ENCODE measurements at regions of chr11 and their contacts with region 1.

Region 1: GRCh38 chr11:1546536-1547400 is 25.3 kb downstream of the DUSP8 start:
- DNase-seq: peak; percentile 21
- ATAC-seq: peak; percentile 90
- H3K4me3 ChIP-seq: peak overlapping the region; percentile 17
- H3K27ac ChIP-seq: no peak overlapping the region
- H3K4me1 ChIP-seq: peaks cover 4% of the 10 kb centered on the region; the same call in 1 of the 2 replicates
- H3K27me3 ChIP-seq: peaks cover 56% of the 10 kb centered on the region
- CTCF ChIP-seq: peak; percentile 86
- POLR2A ChIP-seq: no peak
- RAD21 ChIP-seq: peak; percentile 85

Region 2: DNA sequence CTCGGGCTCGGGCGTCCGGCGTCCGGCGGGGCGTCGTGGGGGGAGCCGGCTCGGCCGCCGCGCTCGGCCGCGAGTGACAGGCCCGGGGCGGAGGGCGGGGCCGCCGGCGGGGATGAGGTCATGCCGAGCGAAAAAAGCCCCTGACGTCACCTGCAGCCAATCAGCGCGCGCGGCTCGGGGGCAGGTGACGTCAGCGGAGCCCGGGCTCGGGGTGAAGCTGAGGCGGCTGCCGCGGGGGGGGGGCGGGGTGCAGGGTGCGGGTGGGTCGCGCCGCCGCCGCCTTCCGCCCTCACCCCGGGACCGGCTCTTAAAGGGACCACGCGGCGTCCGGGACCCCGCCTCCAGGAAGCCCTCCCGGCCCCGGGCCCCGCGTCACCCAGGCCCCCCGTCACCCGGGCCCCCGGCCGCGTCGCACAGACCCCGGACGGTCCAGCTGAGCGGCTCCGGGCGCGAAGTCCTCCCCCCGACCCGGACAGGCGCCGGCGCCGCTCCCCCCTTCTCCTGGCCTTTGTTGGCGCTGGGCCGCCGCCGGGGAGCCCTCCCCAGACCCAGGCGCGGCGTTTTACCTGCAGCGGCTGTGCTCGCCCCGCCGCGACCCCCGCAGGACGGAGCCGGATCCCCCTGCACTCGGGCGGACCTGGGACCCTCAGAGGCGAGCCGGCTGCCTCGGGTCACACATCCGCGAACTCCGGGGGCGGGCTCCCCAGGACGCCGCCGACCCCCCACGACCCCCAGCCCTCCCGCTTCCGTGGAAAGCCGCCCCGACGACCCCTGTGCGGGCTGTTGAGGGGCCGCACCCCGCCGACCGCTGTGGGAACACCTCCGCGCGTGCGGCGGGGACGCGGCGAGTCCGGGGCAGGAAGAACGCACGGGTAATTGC is 25.7 kb after region 1 on chr11 and contains the start of gene DUSP8:
- CTCF ChIA-PET with region 1: interaction called, 30 read pairs
- POLR2A ChIA-PET with region 1: interaction called, 5 read pairs
- dilution Hi-C with region 1: no loop called
- in situ Hi-C with region 1: no loop called
- intact Hi-C with region 1: loop called (anchors 1 kb)
- DNase-seq: peak; percentile 84
- ATAC-seq: peak; percentile 83
- H3K4me3 ChIP-seq: peak within 1 kb of the TSS; percentile 58
- H3K27ac ChIP-seq: peak within 1 kb of the TSS; percentile 15; the same call in 1 of the 2 replicates
- H3K4me1 ChIP-seq: peaks cover 3% of the 10 kb centered on the region
- H3K27me3 ChIP-seq: peaks cover 24% of the 10 kb centered on the region
- CTCF ChIP-seq: no peak
- POLR2A ChIP-seq: peak; percentile 32; the same call in 1 of the 2 replicates
- RAD21 ChIP-seq: no peak
- total RNA-seq, gene DUSP8: 0.28 and 0.72 TPM in 2 replicates

Region 3: DNA sequence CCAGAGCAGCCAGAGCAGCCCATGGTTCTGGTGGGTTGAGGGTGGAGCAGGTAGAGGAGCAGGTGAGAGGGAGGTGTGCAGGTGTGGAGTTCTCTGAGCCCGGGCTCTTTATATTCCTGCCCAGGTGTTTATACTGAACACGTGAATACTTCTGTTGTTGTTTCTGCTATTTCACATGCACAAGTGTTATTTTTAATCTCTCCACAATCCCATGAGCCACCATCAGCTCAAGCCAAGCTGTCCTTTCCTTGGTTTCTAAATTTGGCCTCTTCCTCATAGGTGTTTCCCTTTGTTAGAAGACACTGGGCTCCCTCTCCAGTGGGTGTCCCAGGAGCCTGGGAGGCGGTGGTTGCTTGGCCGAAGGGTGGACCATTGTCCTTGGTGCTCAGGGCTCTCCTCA is 61.6 kb after region 1 on chr11 and contains the start of gene KRTAP5-3:
- CTCF ChIA-PET with region 1: no interaction called
- POLR2A ChIA-PET with region 1: no interaction called
- dilution Hi-C with region 1: no loop called
- in situ Hi-C with region 1: no loop called
- intact Hi-C with region 1: no loop called
- DNase-seq: no peak
- ATAC-seq: no peak
- H3K4me3 ChIP-seq: no peak within 1 kb of the TSS
- H3K27ac ChIP-seq: no peak within 1 kb of the TSS
- H3K4me1 ChIP-seq: no peaks in the 10 kb centered on the region
- H3K27me3 ChIP-seq: peaks cover 49% of the 10 kb centered on the region
- CTCF ChIP-seq: no peak
- POLR2A ChIP-seq: no peak
- RAD21 ChIP-seq: no peak
- total RNA-seq, gene KRTAP5-3: not detected in 2 replicates

Region 4: GRCh38 chr11:1628506-1629325 is 81.9 kb after region 1 on chr11:
- CTCF ChIA-PET with region 1: no interaction called
- POLR2A ChIA-PET with region 1: no interaction called
- dilution Hi-C with region 1: no loop called
- in situ Hi-C with region 1: no loop called
- intact Hi-C with region 1: loop called (anchors 2 kb)
- DNase-seq: peak; percentile 9
- ATAC-seq: peak; percentile 99
- H3K4me3 ChIP-seq: no peak overlapping the region
- H3K27ac ChIP-seq: no peak overlapping the region
- H3K4me1 ChIP-seq: no peaks in the 10 kb centered on the region
- H3K27me3 ChIP-seq: peaks cover 63% of the 10 kb centered on the region
- CTCF ChIP-seq: peak; percentile 76
- POLR2A ChIP-seq: no peak
- RAD21 ChIP-seq: peak; percentile 67

Measured in IMR-90 (cell line).